Activated CD4-positive, alpha-beta memory T cell treated with anti-CD3 and anti-CD28 coated beads, Interleukin-2, amount 10 ng/mL, durations not matched to agents 7 days and 5 days (primary cell): ENCODE measurements at regions of chr1 and their contacts with region 1.

Region 1: DNA sequence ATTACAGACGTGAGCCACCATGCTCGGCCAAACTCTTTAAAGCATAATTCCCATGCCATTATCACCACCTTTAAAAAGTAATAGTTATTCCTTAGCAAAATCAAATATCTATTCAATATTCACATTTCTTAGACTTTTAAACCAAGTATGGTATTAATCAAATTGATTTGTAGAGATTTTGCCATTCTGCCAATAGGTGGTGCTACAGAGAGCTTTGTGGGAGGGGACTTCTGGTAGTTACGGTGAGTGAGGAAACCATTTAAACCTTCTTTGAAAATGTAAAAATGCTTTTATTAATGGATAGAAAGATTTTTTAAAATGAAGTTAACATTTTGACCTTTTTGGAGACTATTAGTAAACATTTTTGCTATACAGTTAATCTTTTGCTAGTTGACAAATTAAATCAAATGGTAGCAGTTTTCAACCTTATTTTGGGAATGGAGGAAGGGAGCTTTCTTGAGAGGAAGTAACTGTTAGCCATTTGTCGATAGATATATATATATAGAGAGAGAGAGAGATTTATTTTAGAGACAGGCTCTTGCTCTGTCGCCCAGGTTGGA is 19.3 kb downstream of the IARS2 start:
- DNase-seq: peak; percentile 31
- H3K4me3 Mint-ChIP-seq: no peak overlapping the region
- H3K27ac Mint-ChIP-seq: no peak overlapping the region
- H3K4me1 Mint-ChIP-seq: peaks cover 7% of the 10 kb centered on the region
- H3K27me3 Mint-ChIP-seq: no peaks in the 10 kb centered on the region

Region 2: DNA sequence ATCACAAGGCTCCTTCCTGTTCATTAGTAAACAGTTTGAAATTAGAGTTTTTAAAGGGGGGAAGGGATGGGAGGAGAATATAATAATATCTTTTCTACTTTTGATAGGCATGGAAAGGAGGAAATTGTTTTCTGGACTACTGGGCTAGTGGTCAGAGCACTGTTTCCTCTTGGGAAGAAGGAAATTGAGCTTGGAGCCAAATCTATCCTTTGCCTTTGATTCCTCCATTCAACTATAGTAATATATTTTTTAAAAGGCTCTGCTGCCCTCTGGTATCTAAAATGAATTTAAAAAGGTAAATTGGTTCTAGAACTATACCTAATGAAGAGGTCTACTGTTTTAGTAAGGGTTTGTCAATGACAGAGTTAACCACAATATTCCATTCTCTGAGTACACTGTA is 13.4 kb before region 1 on chr1:
- CTCF ChIA-PET with region 1: interaction called, 11 read pairs
- POLR2A ChIA-PET with region 1: interaction called, 6 read pairs
- DNase-seq: no peak
- H3K4me3 Mint-ChIP-seq: no peak overlapping the region
- H3K27ac Mint-ChIP-seq: no peak overlapping the region
- H3K4me1 Mint-ChIP-seq: peaks cover 16% of the 10 kb centered on the region
- H3K27me3 Mint-ChIP-seq: no peaks in the 10 kb centered on the region

Region 3: DNA sequence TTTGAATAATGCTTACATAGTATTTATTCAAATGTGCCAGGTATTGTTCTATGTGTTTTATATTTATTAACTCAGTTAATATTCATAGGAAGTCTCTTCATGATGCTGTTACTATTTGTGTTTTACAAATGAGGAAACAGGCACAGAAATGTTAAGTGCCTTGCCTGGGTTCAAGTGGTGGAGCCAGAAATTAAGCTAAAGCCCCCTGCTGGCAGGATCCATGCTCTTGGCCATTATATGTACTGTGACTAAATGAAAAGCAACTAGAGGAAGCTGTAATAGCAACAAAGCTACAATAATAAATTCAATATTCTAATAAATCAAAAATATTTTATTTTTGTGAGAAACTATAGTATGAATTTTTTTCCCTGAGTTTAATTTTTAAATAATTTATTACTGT is 10.7 kb after region 1 on chr1:
- CTCF ChIA-PET with region 1: interaction called, 20 read pairs
- POLR2A ChIA-PET with region 1: no interaction called
- DNase-seq: no peak
- H3K4me3 Mint-ChIP-seq: no peak overlapping the region
- H3K27ac Mint-ChIP-seq: no peak overlapping the region
- H3K4me1 Mint-ChIP-seq: peaks cover 12% of the 10 kb centered on the region
- H3K27me3 Mint-ChIP-seq: no peaks in the 10 kb centered on the region